Activated CD4-positive, alpha-beta T cell treated with anti-CD3 and anti-CD28 coated beads for 36 hours (primary cell): ENCODE measurements at regions of chr3 and their contacts with region 1.

Region 1: DNA sequence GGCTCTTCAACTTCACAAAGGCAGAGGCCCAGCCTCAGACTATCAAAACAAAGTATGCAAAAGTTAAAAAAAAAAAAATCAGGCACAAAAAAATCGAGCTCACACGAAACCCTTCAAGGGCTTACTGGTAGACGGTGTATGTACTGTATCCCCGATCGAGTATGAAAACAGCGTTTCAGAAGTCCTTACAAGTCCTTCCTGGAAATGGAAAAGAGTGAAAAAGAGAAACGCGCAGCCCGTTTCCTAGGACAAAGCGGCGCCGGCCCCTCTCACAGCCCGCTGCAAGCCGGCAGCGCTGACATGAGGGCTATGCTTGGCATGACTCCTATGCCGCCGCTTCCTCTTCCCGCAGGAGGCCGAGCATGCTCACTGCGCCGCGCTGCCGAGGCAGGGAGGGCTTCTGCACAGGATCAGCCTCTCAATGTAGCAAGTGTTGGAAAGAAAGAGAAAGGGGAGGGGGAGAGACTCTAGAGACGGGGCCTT is at the start of gene VGLL4:
- DNase-seq: peak; percentile 85
- ATAC-seq: peak; percentile 74
- H3K4me3 Mint-ChIP-seq: peak within 1 kb of the TSS; percentile 99
- H3K27ac Mint-ChIP-seq: peak within 1 kb of the TSS; percentile 99
- H3K4me1 Mint-ChIP-seq: peaks cover 33% of the 10 kb centered on the region
- H3K27me3 Mint-ChIP-seq: no peaks in the 10 kb centered on the region
- total RNA-seq, gene VGLL4: 24.4 to 24.9 TPM

Region 2: GRCh38 chr3:11195721-11196332 is 447.8 kb before region 1 on chr3:
- CTCF ChIA-PET with region 1: no interaction called
- POLR2A ChIA-PET with region 1: no interaction called
- intact Hi-C with region 1: loop called in 1 of 2 experiments (anchors 5 kb)
- DNase-seq: peak; percentile 64
- ATAC-seq: peak; percentile 87
- H3K4me3 Mint-ChIP-seq: peak overlapping the region; percentile 56
- H3K27ac Mint-ChIP-seq: peak overlapping the region; percentile 94
- H3K4me1 Mint-ChIP-seq: peaks cover 22% of the 10 kb centered on the region
- H3K27me3 Mint-ChIP-seq: peaks cover 13% of the 10 kb centered on the region

Region 3: DNA sequence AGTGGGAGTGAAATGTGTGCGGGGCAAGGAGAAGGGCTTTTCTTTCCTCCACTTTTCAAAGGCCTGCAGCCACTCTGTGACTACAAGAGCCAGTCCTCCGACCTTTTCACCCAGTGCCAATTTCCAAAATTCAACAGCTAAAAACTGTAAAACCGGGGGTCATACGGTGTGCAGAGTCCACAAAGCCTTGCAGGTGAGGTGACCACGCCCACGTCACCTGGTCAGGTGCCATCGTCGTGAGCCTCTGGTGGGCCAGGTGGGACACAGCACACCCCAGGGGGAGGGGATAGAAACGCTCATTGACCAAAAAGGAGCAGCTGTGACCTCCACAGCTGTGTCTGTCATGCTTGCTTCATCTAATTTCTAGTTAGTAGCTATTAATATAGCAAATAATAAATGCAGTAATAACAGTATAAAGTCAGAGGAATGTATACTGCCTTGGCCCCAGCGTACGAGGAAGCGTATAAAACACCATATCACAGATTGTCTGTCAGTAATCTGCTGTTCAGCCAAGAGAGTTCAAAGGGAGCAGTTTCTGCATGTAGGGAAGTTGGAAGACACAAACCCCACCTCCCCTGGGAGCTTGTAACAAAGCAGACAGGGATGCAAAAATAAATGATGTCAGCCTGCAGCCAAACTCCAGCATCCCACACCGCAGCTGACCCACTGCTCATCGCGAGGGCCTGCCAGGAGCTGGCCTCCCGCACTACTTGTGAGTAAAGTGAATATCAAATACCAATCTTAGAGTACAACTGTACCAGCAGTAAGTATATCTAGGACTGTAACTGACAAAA is 86.6 kb before region 1 on chr3:
- CTCF ChIA-PET with region 1: no interaction called
- POLR2A ChIA-PET with region 1: no interaction called
- intact Hi-C with region 1: loop called (anchors 5 to 10 kb)
- DNase-seq: no peak
- ATAC-seq: no peak
- H3K4me3 Mint-ChIP-seq: no peak overlapping the region
- H3K27ac Mint-ChIP-seq: no peak overlapping the region
- H3K4me1 Mint-ChIP-seq: peaks cover 8% of the 10 kb centered on the region
- H3K27me3 Mint-ChIP-seq: no peaks in the 10 kb centered on the region

Region 4: GRCh38 chr3:11568503-11569155 is 75.0 kb before region 1 on chr3:
- CTCF ChIA-PET with region 1: no interaction called
- POLR2A ChIA-PET with region 1: no interaction called
- intact Hi-C with region 1: loop called in 1 of 2 experiments (anchors 10 kb)
- DNase-seq: no peak
- ATAC-seq: no peak
- H3K4me3 Mint-ChIP-seq: no peak overlapping the region
- H3K27ac Mint-ChIP-seq: no peak overlapping the region
- H3K4me1 Mint-ChIP-seq: peaks cover 6% of the 10 kb centered on the region
- H3K27me3 Mint-ChIP-seq: no peaks in the 10 kb centered on the region

Region 5: GRCh38 chr3:11601446-11602238 is 42.0 kb before region 1 on chr3:
- CTCF ChIA-PET with region 1: interaction called, 6 read pairs
- POLR2A ChIA-PET with region 1: no interaction called
- intact Hi-C with region 1: loop called in 1 of 2 experiments (anchors 2 kb)
- DNase-seq: peak; percentile 70
- ATAC-seq: peak; percentile 90
- H3K4me3 Mint-ChIP-seq: no peak overlapping the region
- H3K27ac Mint-ChIP-seq: peak overlapping the region; percentile 73
- H3K4me1 Mint-ChIP-seq: peaks cover 36% of the 10 kb centered on the region
- H3K27me3 Mint-ChIP-seq: no peaks in the 10 kb centered on the region

Region 6: DNA sequence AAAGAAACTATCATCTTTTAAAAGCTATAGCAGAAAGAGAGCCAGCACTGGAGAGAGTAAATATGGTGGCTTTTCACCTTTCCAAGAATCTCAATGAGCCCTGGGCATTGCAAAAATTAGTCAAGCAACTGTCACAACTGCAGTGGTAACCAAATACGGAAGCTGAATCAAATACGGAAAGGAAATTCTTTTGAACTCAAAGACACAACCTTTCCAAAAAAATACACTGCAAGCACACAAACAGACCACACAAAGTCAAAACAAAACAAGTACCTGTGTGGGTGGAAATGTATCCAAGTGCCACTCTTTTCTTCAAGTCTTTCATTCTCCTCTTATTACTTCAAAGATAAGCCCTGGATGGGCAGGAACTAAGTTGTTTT is 17.6 kb before region 1 on chr3:
- CTCF ChIA-PET with region 1: interaction called, 20 read pairs
- POLR2A ChIA-PET with region 1: interaction called, 6 read pairs
- intact Hi-C with region 1: loop called (anchors 1 kb)
- DNase-seq: peak; percentile 44
- ATAC-seq: peak; percentile 67
- H3K4me3 Mint-ChIP-seq: peak overlapping the region; percentile 26
- H3K27ac Mint-ChIP-seq: peak overlapping the region; percentile 66
- H3K4me1 Mint-ChIP-seq: peaks cover 67% of the 10 kb centered on the region
- H3K27me3 Mint-ChIP-seq: no peaks in the 10 kb centered on the region